A549 (cell line): ENCODE measurements at regions of chr4 and their contacts with region 1.

Region 1: GRCh38 chr4:112231779-112232713 is at the start of gene AP1AR:
- DNase-seq: peak; percentile 66
- ATAC-seq: peak; percentile 83 to 88
- H3K4me3 ChIP-seq: peak within 1 kb of the TSS; percentile 95
- H3K27ac ChIP-seq: peak within 1 kb of the TSS; percentile 94 to 96
- H3K4me1 ChIP-seq: peaks cover 28% of the 10 kb centered on the region; the same call in 2 of the 3 replicates
- CTCF ChIP-seq: no peak; the same call in 2 of the 3 replicates
- EP300 ChIP-seq: no peak
- POLR2A ChIP-seq: peak; percentile 83
- RAD21 ChIP-seq: no peak
- polyA plus RNA-seq, gene AP1AR: 21.1 and 34.6 TPM in 2 replicates

Region 2: DNA sequence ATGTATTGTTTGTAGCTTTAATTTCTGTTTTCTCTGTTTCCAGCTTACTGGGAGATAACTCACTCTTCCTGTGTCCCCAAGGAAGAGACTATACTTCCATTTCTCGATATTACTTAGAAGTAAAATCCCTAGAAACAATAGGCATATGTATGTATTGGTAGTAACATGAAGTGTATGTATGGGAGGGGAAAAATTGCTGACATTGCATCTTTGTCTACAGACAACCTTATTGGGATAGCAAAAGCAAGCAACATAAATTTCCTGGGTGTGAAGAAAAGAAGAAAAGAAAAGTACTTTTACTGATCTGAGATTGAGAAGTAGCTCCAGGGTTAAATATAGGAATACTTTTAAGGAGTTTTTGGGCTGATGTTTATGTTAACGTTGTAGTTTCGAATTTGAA is 15.0 kb after region 1 on chr4:
- CTCF ChIA-PET with region 1: interaction called, 16 read pairs
- POLR2A ChIA-PET with region 1: no interaction called
- DNase-seq: no peak
- ATAC-seq: no peak
- H3K4me3 ChIP-seq: no peak overlapping the region
- H3K27ac ChIP-seq: no peak overlapping the region
- H3K4me1 ChIP-seq: no peaks in the 10 kb centered on the region
- CTCF ChIP-seq: no peak
- EP300 ChIP-seq: no peak
- POLR2A ChIP-seq: no peak
- RAD21 ChIP-seq: no peak